ENCODE measurements at regions of chr5 and their contacts with region 1.

Region 1: DNA sequence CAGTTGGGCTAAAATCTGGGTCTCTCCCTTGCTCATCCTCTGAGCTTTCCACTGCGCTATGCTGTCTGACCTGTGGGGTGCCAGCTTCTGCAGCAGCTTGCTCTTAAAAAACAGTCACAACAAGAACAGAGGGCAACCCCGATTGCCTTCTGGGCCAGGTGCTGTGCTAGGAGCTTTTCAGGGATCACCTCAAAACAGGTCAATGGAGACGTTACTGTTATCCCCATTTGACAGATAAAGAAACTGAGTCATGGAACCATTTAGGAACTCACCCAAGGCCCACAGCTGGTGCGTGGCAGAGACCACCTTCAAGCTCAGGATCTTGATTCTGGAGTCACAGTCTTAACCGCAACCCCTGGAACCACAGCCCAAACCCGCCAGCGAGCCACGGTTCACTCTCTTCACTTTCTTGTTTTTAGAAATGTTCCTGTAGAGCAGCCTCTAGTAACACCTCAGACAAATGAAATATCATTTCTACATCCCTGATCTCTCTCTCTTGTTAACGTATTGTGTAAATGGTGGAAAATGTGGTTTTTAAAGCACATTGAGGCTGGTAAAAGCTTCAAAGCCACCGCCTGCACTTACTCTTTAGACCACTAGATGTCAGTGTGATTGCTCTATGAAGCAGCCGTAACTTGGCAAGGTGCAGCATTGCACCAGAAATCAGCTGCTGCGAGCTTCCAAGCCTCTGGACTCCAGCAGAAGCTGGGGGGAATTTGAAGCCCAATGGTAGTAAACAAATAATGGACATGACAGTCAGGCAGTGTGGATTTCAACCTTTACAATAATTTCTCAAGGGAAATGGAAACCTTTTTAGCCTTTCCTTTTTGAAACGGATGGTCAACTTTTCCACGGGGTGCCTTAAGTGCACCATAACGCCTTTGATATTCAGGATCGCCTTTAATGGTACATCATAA is 1.7 kb downstream of the FYB1 start:
- DNase-seq: peak; percentile 71 to 76
- ATAC-seq: peak; percentile 78 to 79
- H3K4me3 ChIP-seq: no peak overlapping the region
- H3K27ac ChIP-seq: peak overlapping the region; percentile 65 to 75 (median 68)
- H3K4me1 ChIP-seq: peaks cover 16 to 19% of the 10 kb centered on the region in 2 donors
- H3K27me3 ChIP-seq: no peaks in the 10 kb centered on the region
- CTCF ChIP-seq: peak; percentile 92 to 95 (median 93)
- POLR2A ChIP-seq: no peak

Region 2: DNA sequence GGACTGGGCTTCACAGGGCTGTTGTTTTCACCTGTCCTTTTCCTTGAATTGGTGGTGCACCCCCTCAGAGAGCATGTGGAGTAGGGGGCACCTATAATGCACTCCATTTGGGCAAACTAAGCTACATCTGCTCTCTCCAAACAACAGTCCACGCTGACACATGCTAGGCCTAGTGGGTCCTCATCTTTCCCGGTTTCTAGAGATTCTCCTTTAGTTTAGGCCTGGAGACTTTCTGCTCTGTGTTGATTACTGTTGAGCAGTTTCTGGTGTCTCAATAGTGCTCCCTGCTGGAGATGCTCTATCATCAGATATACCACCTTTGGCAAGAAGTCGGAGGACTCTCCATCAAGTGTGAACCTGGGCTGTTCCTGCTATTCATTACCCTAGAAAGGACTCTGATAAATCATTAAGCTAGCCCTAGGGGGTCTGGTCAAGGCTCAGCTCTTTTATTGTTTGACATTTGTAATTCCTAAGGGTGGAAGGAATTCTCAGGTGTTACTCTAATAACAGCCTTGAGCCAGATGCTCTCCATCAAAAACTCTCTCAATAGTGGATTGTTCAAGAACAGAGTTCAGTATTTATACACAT is 65.7 kb after region 1 on chr5:
- in situ Hi-C with region 1: loop called in 3 of 4 experiments (anchors 5 to 10 kb)
- intact Hi-C with region 1: loop called (anchors 1 kb)
- DNase-seq: peak in 1 of 2 donors; percentile 10
- ATAC-seq: peak; percentile 89 to 98
- H3K4me3 ChIP-seq: no peak overlapping the region
- H3K27ac ChIP-seq: no peak overlapping the region
- H3K4me1 ChIP-seq: no peaks in the 10 kb centered on the region
- H3K27me3 ChIP-seq: no peaks in the 10 kb centered on the region
- CTCF ChIP-seq: peak; percentile 34 to 66 (median 59)
- POLR2A ChIP-seq: no peak

Region 3: GRCh38 chr5:39547553-39548154 is 330.0 kb after region 1 on chr5:
- in situ Hi-C with region 1: loop called in 3 of 4 experiments (anchors 10 to 25 kb)
- intact Hi-C with region 1: loop called (anchors 2 kb)
- DNase-seq: peak in 1 of 2 donors; percentile 11
- ATAC-seq: peak; percentile 64 to 65
- H3K4me3 ChIP-seq: peak overlapping the region in 1 of 4 donors; percentile 7
- H3K27ac ChIP-seq: no peak overlapping the region
- H3K4me1 ChIP-seq: peaks cover 0 to under 1% of the 10 kb centered on the region in 2 donors
- H3K27me3 ChIP-seq: no peaks in the 10 kb centered on the region
- CTCF ChIP-seq: peak; percentile 16 to 76 (median 61)
- POLR2A ChIP-seq: no peak

Region 4: GRCh38 chr5:39555788-39556187 is 338.2 kb after region 1 on chr5:
- in situ Hi-C with region 1: loop called in 2 of 4 experiments (anchors 10 to 25 kb)
- intact Hi-C with region 1: no loop called
- DNase-seq: no peak
- ATAC-seq: no peak
- H3K4me3 ChIP-seq: no peak overlapping the region
- H3K27ac ChIP-seq: no peak overlapping the region
- H3K4me1 ChIP-seq: no peaks in the 10 kb centered on the region
- H3K27me3 ChIP-seq: no peaks in the 10 kb centered on the region
- CTCF ChIP-seq: no peak
- POLR2A ChIP-seq: no peak

Region 5: DNA sequence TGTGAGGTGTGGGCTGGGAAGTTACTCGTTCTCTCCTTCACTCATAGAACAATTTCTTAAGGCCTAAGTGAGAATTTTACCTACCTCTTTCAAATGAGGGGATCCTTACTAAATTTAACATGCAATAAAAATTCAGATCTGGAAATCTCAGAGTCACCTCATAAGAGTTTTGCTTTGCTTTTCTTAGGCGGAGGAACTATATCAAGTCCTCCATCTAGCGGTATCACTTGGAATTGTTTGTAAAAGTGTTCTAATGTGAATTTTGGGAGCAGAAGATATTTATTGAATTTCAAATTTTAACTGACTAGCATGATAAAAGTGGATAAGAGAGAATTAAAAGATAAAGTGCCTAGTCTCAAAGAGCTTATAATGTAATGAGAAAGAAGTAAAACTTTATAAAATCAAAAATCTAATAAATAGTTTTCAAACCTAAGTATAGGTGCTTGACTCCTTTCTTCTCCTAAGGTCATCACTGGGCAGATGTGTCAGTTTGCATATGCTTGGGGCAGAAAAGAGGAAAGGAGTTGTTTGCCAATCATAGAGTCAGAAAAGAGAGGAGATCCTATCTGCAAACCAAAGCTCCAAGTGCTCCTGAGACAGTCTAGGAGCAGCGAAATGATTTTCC is 352.9 kb after region 1 on chr5:
- in situ Hi-C with region 1: loop called in 2 of 4 experiments (anchors 10 to 25 kb)
- intact Hi-C with region 1: loop called (anchors 2 kb)
- DNase-seq: no peak
- ATAC-seq: no peak
- H3K4me3 ChIP-seq: no peak overlapping the region
- H3K27ac ChIP-seq: no peak overlapping the region
- H3K4me1 ChIP-seq: no peaks in the 10 kb centered on the region
- H3K27me3 ChIP-seq: no peaks in the 10 kb centered on the region
- CTCF ChIP-seq: peak in 4 of 5 experiments; percentile 41 to 63 (median 52)
- POLR2A ChIP-seq: no peak